OCI-LY7 (cell line): ENCODE measurements at regions of chr19 and their contacts with region 1.

Region 1: GRCh38 chr19:15629003-15629880 is 11.5 kb upstream of the CYP4F3 start:
- DNase-seq: peak; percentile 73
- H3K4me3 ChIP-seq: no peak overlapping the region
- H3K27ac ChIP-seq: no peak overlapping the region
- H3K4me1 ChIP-seq: no peaks in the 10 kb centered on the region
- CTCF ChIP-seq: peak; percentile 97

Region 2: DNA sequence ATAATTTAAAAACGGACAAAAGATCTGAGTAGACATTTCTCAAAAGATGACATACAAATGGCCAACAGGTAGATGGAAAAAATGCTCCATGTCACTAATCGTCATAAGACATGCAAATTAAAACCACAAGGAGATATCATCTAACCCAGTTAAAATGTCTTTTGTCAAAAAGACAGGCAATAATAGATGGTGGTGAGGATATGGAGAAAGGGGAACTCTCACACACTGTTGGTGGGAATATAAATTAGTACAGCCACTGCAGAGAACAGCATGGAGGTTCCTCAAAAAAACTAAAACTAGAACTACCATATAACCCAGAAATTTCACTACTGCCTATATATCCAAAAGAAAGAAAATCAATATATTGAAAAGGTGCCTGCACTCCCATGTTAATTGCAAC is 357.5 kb after region 1 on chr19:
- CTCF ChIA-PET with region 1: no interaction called
- POLR2A ChIA-PET with region 1: no interaction called
- intact Hi-C with region 1: loop called (anchors 10 kb)
- DNase-seq: no peak
- H3K4me3 ChIP-seq: no peak overlapping the region
- H3K27ac ChIP-seq: no peak overlapping the region
- H3K4me1 ChIP-seq: no peaks in the 10 kb centered on the region
- CTCF ChIP-seq: no peak

Region 3: GRCh38 chr19:16041299-16041990 is 412.2 kb after region 1 on chr19:
- CTCF ChIA-PET with region 1: no interaction called
- POLR2A ChIA-PET with region 1: no interaction called
- intact Hi-C with region 1: loop called (anchors 2 kb)
- DNase-seq: peak; percentile 68
- H3K4me3 ChIP-seq: no peak overlapping the region
- H3K27ac ChIP-seq: no peak overlapping the region
- H3K4me1 ChIP-seq: no peaks in the 10 kb centered on the region
- CTCF ChIP-seq: peak; percentile 99